ENCODE measurements at regions of chr13 and their contacts with region 1.

Region 1: GRCh38 chr13:97781891-97782305 is 171.6 kb upstream of the IPO5 start:
- DNase-seq: peak; percentile 16 to 84
- H3K4me3 ChIP-seq: no peak overlapping the region
- H3K27ac ChIP-seq: peak overlapping the region; percentile 74 to 87
- H3K4me1 ChIP-seq: peaks cover 0 to 17% of the 10 kb centered on the region in 2 donors
- H3K27me3 ChIP-seq: no peaks in the 10 kb centered on the region
- CTCF ChIP-seq: no peak

Region 2: GRCh38 chr13:97307882-97308624 is 473.8 kb before region 1 on chr13:
- intact Hi-C with region 1: no loop called
- DNase-seq: no peak
- H3K4me3 ChIP-seq: no peak overlapping the region
- H3K27ac ChIP-seq: peak overlapping the region in 1 of 2 donors; percentile 3
- H3K4me1 ChIP-seq: peaks cover 0 to 16% of the 10 kb centered on the region in 2 donors
- H3K27me3 ChIP-seq: no peaks in the 10 kb centered on the region
- CTCF ChIP-seq: no peak

Region 3: DNA sequence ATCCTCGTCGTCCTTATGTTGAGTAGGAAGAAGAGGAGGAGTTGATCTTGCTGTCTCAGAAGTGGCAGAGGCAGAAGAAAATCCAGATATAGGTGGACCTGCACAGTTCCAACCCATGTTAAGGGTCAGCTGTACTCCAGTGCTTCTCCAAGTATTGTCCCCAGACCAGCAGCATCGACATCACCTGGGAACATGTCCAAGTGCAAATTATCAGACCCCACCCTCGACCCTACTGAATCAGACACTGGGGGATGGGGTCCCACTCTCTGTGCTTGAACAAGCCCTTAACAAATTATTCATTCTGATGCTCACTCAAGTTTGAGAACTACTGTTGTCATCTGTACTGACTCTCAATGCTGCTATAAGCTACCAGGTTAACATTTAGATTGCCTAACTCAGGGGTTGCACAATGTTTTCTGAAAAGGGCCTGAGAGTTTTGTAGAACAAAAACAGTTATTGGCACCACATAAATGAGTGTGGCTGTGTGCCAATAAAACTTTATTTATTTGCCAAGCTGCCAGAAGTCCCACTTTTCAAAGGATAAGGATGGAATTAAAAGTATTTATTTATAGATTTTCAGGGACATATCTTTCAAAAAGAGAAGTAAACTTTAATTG is 55.1 kb before region 1 on chr13:
- intact Hi-C with region 1: loop called (anchors 10 kb)
- DNase-seq: peak in 1 of 2 donors; percentile 67
- H3K4me3 ChIP-seq: no peak overlapping the region
- H3K27ac ChIP-seq: peak overlapping the region; percentile 45 to 59
- H3K4me1 ChIP-seq: peaks cover 0 to 20% of the 10 kb centered on the region in 2 donors
- H3K27me3 ChIP-seq: no peaks in the 10 kb centered on the region
- CTCF ChIP-seq: no peak

Region 4: DNA sequence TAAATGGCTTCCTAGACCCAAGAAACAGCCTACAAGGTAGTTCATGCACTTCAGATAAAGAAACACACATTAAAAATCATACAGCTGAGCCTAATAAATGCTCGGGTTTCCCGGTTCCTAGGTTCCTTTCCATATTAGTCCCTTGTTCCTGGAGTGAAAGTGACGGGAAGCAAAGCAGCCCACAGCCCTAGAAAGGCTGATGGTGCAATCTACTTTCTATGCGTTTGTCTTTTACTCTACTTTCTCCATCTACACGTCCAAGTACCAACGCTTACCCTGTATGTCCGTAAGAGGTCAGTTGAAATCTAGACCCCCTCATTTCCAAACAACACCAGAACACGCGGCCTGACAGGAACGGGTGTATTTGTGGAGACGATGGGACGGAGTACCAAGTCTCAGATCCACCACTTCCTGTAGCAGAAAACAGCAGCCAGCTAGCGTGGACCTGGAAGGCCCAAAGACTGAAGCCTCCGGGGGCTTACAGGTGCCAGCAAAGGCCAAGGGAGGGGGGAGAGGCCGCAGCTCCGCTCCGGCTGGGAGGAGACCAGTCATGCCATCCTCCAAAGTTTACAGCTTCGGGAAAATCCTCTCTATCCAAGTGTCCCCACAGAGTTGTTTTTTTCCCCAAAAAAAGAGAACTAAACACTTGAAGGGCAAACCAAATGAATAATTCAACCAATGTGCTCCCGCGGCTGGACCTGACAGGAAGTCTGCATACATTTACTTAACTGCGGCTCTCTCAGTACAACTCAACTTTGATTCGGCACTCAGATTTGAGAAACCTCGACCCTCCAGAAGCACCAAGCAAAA is 760.9 kb after region 1 on chr13:
- intact Hi-C with region 1: no loop called
- DNase-seq: no peak
- H3K4me3 ChIP-seq: peak overlapping the region in 1 of 2 donors; percentile 21
- H3K27ac ChIP-seq: peak overlapping the region in 1 of 2 donors; percentile 26
- H3K4me1 ChIP-seq: peaks cover 3 to 18% of the 10 kb centered on the region in 2 donors
- H3K27me3 ChIP-seq: no peaks in the 10 kb centered on the region
- CTCF ChIP-seq: no peak